ENCODE measurements at regions of chr11 and their contacts with region 1.

Region 1: GRCh38 chr11:83071567-83072349 is at the start of gene RAB30:
- DNase-seq: peak; percentile 98
- H3K4me3 ChIP-seq: peak within 1 kb of the TSS; percentile 73
- H3K27ac ChIP-seq: peak within 1 kb of the TSS; percentile 84
- H3K4me1 ChIP-seq: peaks cover 4% of the 10 kb centered on the region
- H3K27me3 ChIP-seq: no peaks in the 10 kb centered on the region
- CTCF ChIP-seq: no peak
- total RNA-seq, gene RAB30: 6.3 to 16.9 TPM

Region 2: GRCh38 chr11:82818409-82819043 is 253.2 kb before region 1 on chr11:
- intact Hi-C with region 1: no loop called
- DNase-seq: no peak
- H3K4me3 ChIP-seq: no peak overlapping the region
- H3K27ac ChIP-seq: no peak overlapping the region
- H3K4me1 ChIP-seq: no peaks in the 10 kb centered on the region
- H3K27me3 ChIP-seq: no peaks in the 10 kb centered on the region
- CTCF ChIP-seq: no peak

Region 3: GRCh38 chr11:83151274-83151977 is 79.7 kb after region 1 on chr11:
- intact Hi-C with region 1: loop called (anchors 5 kb)
- DNase-seq: peak; percentile 73
- H3K4me3 ChIP-seq: no peak overlapping the region
- H3K27ac ChIP-seq: no peak overlapping the region
- H3K4me1 ChIP-seq: no peaks in the 10 kb centered on the region
- H3K27me3 ChIP-seq: no peaks in the 10 kb centered on the region
- CTCF ChIP-seq: no peak

Region 4: DNA sequence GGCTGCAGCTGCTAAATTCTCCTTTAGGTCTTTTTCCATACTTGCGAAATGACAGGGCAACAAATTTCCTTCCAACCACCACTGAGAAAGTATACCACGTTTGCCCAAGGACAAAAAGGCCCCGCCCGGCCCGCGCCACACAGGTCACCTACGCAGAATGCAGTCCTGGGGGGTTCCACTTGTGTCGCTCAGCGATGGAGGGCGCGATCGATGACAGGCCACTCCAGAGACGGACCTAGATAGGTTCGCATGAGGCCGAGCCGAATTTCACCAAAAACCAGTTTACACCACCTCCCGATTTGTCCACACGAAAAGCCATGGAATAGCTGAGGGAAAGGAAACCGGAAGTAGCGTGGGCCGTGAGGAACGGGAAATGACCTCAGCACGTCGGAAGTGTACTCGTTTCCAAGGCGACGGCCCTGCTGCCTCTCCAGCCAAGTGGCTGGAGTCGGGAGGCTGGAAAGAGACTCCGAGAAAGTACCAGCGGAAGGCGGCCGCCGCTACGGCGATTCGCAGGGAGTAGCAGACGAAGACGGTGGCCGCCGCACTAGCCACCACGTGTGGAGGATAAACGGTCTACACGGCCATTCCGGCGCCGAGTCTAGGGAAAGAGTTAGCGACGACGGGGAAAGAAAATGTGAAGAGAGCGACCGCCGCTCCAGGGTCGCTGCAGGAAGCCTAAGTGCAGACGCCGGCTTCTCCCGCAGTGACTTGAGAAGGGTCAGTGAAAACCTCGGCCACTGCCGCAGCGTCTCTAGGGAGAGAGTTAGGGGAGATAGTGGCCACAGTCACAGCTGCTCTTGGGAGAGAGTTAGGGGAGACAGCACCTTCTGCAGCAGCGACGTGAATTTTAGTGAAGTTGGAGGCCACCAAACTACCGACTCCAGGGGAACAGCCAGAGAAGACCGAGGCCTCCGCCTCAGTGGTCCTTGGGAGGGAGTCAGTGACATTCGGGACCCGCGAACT is 121.8 kb after region 1 on chr11 and contains the start of gene ANKRD42:
- intact Hi-C with region 1: loop called (anchors 10 kb)
- DNase-seq: peak; percentile 95
- H3K4me3 ChIP-seq: peak within 1 kb of the TSS; percentile 67
- H3K27ac ChIP-seq: peak within 1 kb of the TSS; percentile 89
- H3K4me1 ChIP-seq: no peaks in the 10 kb centered on the region
- H3K27me3 ChIP-seq: no peaks in the 10 kb centered on the region
- CTCF ChIP-seq: no peak
- total RNA-seq, gene ANKRD42: 8.0 to 8.2 TPM

Measured in colonic mucosa (tissue), 4 donors.